ENCODE measurements at regions of chr15 and their contacts with region 1.

Region 1: GRCh38 chr15:73628976-73629797 is 4.0 kb downstream of the NPTN start:
- DNase-seq: no peak
- H3K4me3 ChIP-seq: peak overlapping the region in 1 of 4 donors; percentile 14
- H3K27ac ChIP-seq: peak overlapping the region; percentile 94 to 99 (median 98)
- H3K4me1 ChIP-seq: peaks cover 70 to 87% (median 85%) of the 10 kb centered on the region in 4 donors
- H3K27me3 ChIP-seq: no peaks in the 10 kb centered on the region
- CTCF ChIP-seq: no peak
- EP300 ChIP-seq: no peak
- POLR2A ChIP-seq: no peak

Region 2: DNA sequence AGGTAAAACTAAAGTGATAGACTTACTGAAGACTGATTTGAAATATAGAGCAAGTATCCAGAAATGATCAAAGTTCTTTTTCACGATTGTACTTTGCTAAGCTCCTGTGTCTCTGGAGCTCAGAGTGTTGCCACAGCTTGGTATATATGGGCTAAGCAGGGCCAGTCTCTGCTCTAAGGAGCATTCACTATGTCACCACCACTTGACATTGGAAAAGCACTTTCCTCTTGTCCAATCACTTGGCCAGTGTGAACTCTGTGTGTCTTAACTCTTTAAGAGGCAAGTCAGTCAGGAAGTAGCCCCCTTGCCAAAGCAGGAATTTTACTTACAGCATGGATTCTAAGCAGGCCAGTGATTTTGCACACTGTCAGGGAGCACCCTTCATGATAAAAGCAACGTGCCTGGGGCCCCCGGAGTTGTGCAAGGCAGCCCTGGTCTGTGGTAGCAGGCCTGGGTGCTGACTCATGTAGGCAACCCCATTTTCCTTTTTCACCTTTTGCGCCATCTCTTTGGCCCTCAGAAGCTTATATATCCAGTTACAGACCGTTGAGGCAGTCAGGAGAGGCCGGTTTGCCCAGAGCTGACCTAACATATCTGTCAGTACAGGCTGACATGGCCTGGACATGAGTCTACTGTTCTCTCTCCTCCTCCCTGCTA is 333.4 kb before region 1 on chr15:
- intact Hi-C with region 1: no loop called
- DNase-seq: no peak
- H3K4me3 ChIP-seq: no peak overlapping the region
- H3K27ac ChIP-seq: no peak overlapping the region
- H3K4me1 ChIP-seq: no peaks in the 10 kb centered on the region
- H3K27me3 ChIP-seq: no peaks in the 10 kb centered on the region
- CTCF ChIP-seq: no peak
- EP300 ChIP-seq: no peak
- POLR2A ChIP-seq: no peak

Region 3: DNA sequence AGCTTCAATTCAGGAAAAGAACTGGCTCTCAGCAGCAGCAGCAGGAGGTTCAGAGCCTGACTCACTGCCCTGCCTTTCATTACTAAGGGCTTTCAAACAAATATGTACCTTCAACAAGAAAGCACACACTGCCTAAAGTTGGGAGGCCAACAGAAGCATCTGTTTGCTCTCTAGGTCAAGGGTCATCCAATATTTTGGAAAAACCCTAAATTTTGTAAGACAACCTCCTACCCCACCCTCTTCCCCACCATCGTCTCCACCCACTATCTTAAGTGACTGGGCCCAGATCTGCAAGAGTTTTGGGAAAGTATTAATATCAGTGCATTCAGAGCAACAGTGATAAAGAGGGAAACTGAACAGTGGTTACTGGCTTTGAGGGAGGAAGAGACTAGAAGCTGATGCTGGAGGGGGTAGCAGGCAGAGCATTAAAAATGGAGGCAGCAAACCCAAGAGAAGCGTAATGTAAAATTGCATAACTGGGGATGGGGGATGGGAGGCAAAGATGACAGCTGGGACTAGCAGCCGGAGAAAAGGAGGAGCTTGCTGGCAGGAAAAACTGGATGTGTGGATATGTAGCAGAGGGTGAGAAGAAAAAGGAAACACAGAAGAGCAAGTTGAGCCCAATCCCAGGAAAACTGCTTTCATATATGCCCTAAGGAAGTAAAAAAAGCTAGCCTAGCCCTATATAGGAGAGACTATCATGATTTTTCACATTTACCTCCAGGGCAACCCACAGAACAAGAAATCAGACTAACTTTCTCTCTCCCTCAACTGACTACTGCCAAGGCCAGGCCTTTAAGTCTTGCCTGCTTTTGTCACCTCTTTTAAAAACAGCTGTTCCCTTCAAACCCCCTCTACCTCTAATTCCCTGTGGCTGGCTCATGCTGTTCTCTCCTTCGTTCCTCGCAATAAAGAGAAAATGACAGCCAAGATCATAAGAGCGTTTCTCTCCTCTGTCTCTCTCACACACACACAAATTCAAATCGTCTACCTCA is 27.4 kb before region 1 on chr15:
- intact Hi-C with region 1: loop called (anchors 2 kb)
- DNase-seq: no peak
- H3K4me3 ChIP-seq: peak overlapping the region in 2 of 4 donors; percentile 15 to 20
- H3K27ac ChIP-seq: peak overlapping the region; percentile 78 to 81 (median 80)
- H3K4me1 ChIP-seq: peaks cover 82 to 100% (median 99%) of the 10 kb centered on the region in 4 donors
- H3K27me3 ChIP-seq: no peaks in the 10 kb centered on the region
- CTCF ChIP-seq: no peak
- EP300 ChIP-seq: no peak
- POLR2A ChIP-seq: no peak

Region 4: GRCh38 chr15:73677146-73677607 is 48.0 kb after region 1 on chr15:
- intact Hi-C with region 1: no loop called
- DNase-seq: peak; percentile 91
- H3K4me3 ChIP-seq: no peak overlapping the region
- H3K27ac ChIP-seq: no peak overlapping the region
- H3K4me1 ChIP-seq: peaks cover 0 to 7% (median 3%) of the 10 kb centered on the region in 4 donors
- H3K27me3 ChIP-seq: peaks cover 0 to 14% (median 0%) of the 10 kb centered on the region in 4 donors
- CTCF ChIP-seq: peak; percentile 91 to 95 (median 93)
- EP300 ChIP-seq: no peak
- POLR2A ChIP-seq: no peak

Measured in esophagus muscularis mucosa (tissue), 4 donors.